BJ (cell line): ENCODE measurements at regions of chr19 and their contacts with region 1.

Region 1: GRCh38 chr19:39110263-39110967 is 15.2 kb upstream of the PAK4 start:
- DNase-seq: no peak
- H3K4me3 ChIP-seq: no peak overlapping the region
- H3K27me3 ChIP-seq: peaks cover 1% of the 10 kb centered on the region; the same call in 1 of the 2 replicates
- CTCF ChIP-seq: peak; percentile 82

Region 2: DNA sequence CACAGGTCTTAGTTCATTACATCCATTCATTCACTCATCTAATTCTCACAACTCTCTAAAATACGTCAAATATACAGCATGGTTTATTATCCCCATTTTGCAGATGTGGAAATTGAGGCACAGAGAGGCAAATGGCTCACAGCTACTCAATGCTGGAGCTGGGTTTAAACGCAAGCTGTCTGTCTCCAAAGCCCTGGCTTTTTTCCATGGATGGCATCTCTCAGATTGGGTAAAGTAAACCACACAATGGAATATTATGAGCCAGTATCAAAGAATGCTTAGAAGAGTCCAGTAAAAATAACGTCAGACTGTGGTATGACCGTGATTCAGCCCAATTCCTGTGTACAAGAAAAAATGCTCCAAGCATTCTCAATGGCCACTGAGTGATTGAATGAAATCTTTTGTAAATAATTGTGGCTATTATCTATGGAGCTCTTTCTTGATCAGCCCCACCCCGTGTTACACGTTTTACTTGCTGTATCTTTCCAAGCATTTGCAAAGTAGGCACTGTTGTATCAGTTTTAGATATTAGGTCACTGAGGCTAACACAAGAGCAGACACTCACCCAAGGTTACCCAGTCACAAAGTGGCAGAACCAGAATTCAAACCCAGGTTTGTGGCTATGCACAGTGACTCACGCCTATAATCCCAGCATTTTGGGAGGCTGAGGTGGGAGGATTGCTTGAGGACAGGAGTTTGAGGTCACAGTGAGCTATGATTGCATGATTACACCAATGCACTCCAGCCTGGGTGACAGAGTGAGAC is 31.8 kb before region 1 on chr19:
- CTCF ChIA-PET with region 1: interaction called, 10 read pairs
- POLR2A ChIA-PET with region 1: interaction called, 3 read pairs
- DNase-seq: peak; percentile 90
- H3K4me3 ChIP-seq: no peak overlapping the region
- H3K27me3 ChIP-seq: peaks cover under 1% of the 10 kb centered on the region
- CTCF ChIP-seq: no peak

Region 3: DNA sequence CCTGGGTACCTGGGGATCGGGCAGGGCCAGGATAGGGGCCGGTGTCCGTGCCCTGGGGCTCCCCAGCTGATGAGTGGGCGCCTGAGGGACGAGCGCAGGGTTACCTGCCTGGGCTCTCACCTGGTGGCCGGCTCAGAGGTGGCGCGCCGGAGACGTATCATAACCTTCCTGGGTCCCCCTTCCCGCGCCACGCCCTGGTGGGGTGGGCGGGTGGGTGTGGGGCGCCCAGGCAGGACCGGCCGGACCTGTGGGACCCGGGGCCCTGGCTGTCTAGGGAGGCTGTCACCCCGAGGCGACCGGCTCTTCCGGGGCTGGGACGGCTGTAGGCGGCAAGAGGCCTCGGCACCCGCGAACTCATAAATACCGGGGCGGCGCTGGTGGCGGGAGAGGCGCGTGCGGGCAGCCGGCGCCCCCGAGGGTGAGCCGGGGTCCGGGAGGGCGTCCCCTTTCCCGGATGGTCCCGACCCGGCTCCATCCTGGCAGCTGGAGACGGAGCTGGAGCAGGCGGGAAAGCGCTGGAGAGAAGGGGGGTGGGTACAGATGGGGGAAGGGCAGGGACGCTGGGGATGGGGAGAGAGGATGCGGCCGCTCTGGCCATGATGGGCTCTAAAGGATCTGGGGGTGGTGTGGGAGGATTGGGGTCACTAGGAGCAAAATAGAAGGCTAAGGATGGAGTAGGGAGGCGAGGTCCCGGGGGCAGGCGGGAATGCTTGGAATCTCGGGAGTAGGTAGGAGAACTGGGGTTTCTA is 26.3 kb before region 1 on chr19 and contains the start of gene ACP7:
- CTCF ChIA-PET with region 1: interaction called, 10 read pairs
- POLR2A ChIA-PET with region 1: interaction called, 3 read pairs
- DNase-seq: no peak
- H3K4me3 ChIP-seq: peak within 1 kb of the TSS; percentile 28
- H3K27me3 ChIP-seq: peaks cover 21% of the 10 kb centered on the region
- CTCF ChIP-seq: no peak
- polyA plus RNA-seq, gene ACP7: not detected in 2 replicates

Region 4: DNA sequence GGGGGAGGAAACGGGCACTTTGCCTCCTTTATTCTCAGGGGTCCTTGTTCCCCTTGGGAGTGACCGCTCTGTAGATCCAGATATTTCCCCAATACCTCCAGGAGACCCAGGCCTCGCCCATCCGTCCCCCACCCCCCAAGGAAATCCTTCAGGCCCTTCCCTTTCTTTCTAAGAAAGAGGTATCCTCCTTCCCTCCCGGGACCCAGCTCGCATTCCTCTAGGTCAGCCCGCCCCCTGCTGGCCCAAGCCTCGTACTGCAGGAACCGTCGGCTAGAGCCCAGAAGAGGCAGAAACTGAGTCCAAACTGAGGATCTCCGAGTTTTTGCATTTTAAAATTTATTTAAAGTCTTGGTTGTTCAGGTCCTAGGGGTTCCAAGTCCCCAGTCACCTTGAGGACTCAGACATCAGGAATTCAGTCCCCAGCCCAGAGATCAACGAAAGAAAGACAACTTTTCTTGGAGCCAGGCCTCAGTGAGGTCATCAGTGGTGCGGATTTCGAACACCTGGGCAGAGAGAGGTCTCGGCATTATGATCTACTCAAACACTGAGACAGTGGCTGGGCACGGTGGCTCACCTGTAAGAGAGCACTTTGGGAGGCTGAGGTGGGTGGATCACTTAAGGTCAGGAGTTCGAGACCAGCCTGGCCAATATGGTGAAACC is 217.8 kb after region 1 on chr19:
- CTCF ChIA-PET with region 1: interaction called, 27 read pairs
- POLR2A ChIA-PET with region 1: no interaction called
- DNase-seq: no peak
- H3K4me3 ChIP-seq: no peak overlapping the region
- H3K27me3 ChIP-seq: peaks cover 1% of the 10 kb centered on the region
- CTCF ChIP-seq: peak; percentile 98